Activated CD8-positive, alpha-beta T cell treated with anti-CD3 and anti-CD28 coated beads for 36 hours (primary cell): ENCODE measurements at regions of chr15 and their contacts with region 1.

Region 1: DNA sequence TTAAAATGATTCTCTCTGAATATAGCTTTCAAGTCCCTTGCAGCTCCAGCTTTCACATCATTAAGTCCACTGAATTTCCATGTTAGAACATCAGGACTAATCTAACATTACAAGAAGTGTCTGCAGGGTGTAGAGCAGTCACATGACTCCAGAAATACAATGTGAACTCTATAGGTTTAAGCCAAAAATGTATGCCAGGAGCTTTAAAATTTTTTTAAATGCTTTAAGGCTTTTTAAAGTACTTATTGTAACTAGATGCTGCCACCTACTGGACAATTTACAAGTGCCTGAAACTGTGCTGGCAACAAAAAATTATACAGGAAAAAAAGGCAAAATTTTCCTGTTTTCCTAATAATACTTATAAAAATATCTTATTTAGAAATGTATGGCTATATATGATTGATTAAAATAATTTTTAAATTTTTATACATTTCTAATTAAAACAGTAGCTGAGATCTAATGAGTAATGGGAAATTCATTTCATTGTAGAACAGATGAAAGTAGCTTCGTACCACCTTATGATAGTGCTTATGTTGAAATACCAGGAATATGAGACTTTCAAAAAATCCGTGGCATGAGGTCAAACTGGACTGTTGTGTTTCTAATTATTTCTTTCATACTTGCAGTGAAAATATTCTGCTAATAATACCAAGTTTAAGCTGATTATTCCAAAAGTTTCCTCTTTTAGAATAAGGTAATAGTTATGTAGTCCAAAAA is 25.7 kb downstream of the FSIP1 start:
- DNase-seq: peak; percentile 38
- ATAC-seq: peak; percentile 37
- H3K4me3 Mint-ChIP-seq: no peak overlapping the region
- H3K27ac Mint-ChIP-seq: no peak overlapping the region
- H3K4me1 Mint-ChIP-seq: no peaks in the 10 kb centered on the region
- H3K27me3 Mint-ChIP-seq: no peaks in the 10 kb centered on the region
- CTCF ChIP-seq: peak; percentile 90

Region 2: GRCh38 chr15:39580117-39580484 is 176.9 kb before region 1 on chr15:
- CTCF ChIA-PET with region 1: interaction called, 75 read pairs
- POLR2A ChIA-PET with region 1: no interaction called
- intact Hi-C with region 1: loop called (anchors 1 kb)
- DNase-seq: peak; percentile 94
- ATAC-seq: peak; percentile 92
- H3K4me3 Mint-ChIP-seq: peak overlapping the region; percentile 66
- H3K27ac Mint-ChIP-seq: no peak overlapping the region
- H3K4me1 Mint-ChIP-seq: peaks cover 11% of the 10 kb centered on the region
- H3K27me3 Mint-ChIP-seq: peaks cover 48% of the 10 kb centered on the region
- CTCF ChIP-seq: peak; percentile 99

Region 3: DNA sequence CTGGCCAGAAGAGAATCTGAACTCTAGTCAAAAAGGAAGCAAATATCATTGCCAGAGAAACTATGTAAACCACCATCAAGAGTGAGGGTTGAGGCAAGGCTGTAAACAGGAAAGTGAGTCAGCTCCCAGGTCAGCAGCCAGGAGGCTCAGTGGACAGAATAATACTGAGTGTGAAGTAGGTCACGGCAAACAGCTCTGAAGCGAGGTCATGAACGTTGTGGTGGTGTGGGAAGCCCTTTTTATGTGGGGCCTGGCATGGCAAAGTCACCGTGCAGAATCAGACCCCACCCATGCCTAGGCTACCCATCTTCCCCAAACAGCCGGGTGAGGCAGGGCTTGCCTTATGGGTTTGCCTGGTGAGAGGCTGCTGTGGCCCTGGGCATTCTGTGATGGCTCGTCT is 132.2 kb before region 1 on chr15:
- CTCF ChIA-PET with region 1: interaction called, 20 read pairs
- POLR2A ChIA-PET with region 1: no interaction called
- intact Hi-C with region 1: no loop called
- DNase-seq: peak; percentile 87
- ATAC-seq: peak; percentile 72
- H3K4me3 Mint-ChIP-seq: peak overlapping the region; percentile 57
- H3K27ac Mint-ChIP-seq: peak overlapping the region; percentile 96
- H3K4me1 Mint-ChIP-seq: peaks cover 73% of the 10 kb centered on the region
- H3K27me3 Mint-ChIP-seq: no peaks in the 10 kb centered on the region
- CTCF ChIP-seq: no peak

Region 4: DNA sequence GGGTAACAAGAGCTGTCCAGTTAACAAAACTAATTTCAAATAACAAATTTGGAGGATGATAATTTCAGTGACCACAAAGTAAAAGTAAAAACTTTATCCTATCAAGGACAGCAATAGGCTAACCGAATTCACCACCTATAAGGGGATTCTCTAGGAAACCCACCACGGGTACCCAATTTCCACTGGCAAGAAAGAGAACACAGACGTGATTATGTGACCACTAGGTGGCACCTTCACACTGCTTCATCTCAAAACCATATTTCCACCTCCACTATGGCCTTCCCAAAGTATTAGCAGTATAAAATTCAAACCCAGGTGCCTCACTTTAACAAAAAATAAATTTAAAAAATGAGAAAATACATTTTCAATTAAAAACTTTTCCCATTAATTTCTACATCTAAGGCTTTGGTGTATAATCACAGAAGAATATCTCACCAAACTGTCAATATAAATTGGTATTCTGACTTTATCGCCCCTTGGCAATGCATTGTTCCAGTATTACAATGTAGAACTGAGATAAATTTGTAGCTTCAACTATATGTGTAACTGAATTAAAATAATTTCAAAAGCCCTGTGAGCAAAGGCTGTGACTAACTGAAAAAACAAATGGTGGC is 70.9 kb before region 1 on chr15:
- CTCF ChIA-PET with region 1: interaction called, 112 read pairs
- POLR2A ChIA-PET with region 1: no interaction called
- intact Hi-C with region 1: loop called (anchors 5 kb)
- DNase-seq: peak; percentile 51
- ATAC-seq: no peak
- H3K4me3 Mint-ChIP-seq: no peak overlapping the region
- H3K27ac Mint-ChIP-seq: no peak overlapping the region
- H3K4me1 Mint-ChIP-seq: no peaks in the 10 kb centered on the region
- H3K27me3 Mint-ChIP-seq: no peaks in the 10 kb centered on the region
- CTCF ChIP-seq: peak; percentile 96

Region 5: DNA sequence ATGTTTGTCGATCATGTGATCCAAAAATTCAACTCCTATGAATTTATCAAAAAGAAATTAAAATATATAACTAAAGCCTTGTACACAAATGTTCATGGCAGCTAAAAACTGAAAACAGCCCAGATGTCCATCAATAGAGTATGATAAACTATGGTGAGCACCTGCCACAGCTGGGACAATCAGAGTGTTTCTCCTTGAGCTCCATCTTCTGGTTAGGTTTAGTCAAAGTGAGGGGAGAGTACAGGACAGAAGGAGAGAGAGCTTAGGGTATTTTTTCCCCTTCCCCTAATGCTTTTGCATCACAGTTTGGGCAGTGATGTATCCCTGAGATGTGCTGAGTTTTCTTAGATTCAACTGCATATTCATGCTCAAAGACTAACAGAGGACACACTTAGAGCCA is 39.8 kb before region 1 on chr15:
- CTCF ChIA-PET with region 1: interaction called, 21 read pairs
- POLR2A ChIA-PET with region 1: no interaction called
- intact Hi-C with region 1: no loop called
- DNase-seq: no peak
- ATAC-seq: no peak
- H3K4me3 Mint-ChIP-seq: no peak overlapping the region
- H3K27ac Mint-ChIP-seq: no peak overlapping the region
- H3K4me1 Mint-ChIP-seq: peaks cover 4% of the 10 kb centered on the region
- H3K27me3 Mint-ChIP-seq: no peaks in the 10 kb centered on the region
- CTCF ChIP-seq: no peak

Region 6: DNA sequence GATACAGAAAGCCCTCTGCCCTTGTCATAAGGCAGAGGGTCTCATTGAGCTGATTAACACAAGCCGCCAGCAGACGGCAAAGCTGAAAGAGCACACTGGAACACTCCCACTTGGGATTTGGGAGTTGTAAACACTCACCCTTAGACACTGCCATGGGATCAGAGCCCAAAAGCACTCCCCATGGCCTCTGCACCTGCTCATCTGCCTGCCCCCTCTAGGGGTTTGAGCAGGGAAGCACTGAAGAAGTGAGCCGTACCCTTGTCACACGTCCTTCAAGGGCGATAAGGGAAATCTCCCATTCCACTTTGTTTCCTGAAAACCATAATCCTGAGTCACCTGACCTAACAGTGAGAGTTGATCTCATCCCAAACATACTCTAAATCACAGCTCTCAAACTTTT is 11.0 kb after region 1 on chr15:
- CTCF ChIA-PET with region 1: interaction called, 41 read pairs
- POLR2A ChIA-PET with region 1: interaction called, 4 read pairs
- intact Hi-C with region 1: no loop called
- DNase-seq: no peak
- ATAC-seq: no peak
- H3K4me3 Mint-ChIP-seq: no peak overlapping the region
- H3K27ac Mint-ChIP-seq: no peak overlapping the region
- H3K4me1 Mint-ChIP-seq: peaks cover 4% of the 10 kb centered on the region
- H3K27me3 Mint-ChIP-seq: no peaks in the 10 kb centered on the region
- CTCF ChIP-seq: no peak

Region 7: DNA sequence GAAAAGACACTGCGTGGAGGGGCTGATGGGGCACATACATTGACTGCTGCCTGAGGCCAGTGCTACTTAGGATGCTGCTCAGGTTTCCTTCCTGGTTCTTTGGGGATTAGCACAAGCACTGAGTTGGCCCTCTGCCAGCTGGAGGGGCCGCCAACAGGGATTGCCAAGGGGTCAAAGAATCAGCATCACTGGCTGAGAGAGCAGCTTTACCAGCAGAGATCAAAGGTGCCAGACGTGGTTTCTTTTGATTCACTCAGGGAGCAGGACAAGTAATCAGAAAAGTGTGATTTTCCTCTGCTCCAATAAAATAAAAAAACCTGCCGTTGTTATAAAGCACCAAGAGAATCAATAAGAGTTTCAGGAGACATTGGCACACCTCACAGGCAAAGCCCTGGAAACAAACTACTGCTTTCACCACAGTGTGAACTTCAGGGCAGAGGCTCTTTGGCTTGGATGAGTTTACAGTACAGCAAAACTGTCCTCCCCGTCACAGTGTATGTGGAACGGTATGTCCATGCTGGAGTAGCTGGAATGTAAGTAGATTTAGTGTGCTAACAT is 71.5 kb after region 1 on chr15:
- CTCF ChIA-PET with region 1: no interaction called
- POLR2A ChIA-PET with region 1: no interaction called
- intact Hi-C with region 1: no loop called
- DNase-seq: no peak
- ATAC-seq: no peak
- H3K4me3 Mint-ChIP-seq: no peak overlapping the region
- H3K27ac Mint-ChIP-seq: no peak overlapping the region
- H3K4me1 Mint-ChIP-seq: no peaks in the 10 kb centered on the region
- H3K27me3 Mint-ChIP-seq: peaks cover 29% of the 10 kb centered on the region
- CTCF ChIP-seq: no peak